ENCODE measurements at regions of chr14 and their contacts with region 1.

Region 1: GRCh38 chr14:103819503-103820307 is 27.7 kb downstream of the PPP1R13B start:
- DNase-seq: no peak
- H3K4me3 ChIP-seq: no peak overlapping the region
- H3K27ac ChIP-seq: no peak overlapping the region
- H3K4me1 ChIP-seq: peaks cover 14% of the 10 kb centered on the region
- H3K27me3 ChIP-seq: no peaks in the 10 kb centered on the region
- CTCF ChIP-seq: no peak
- POLR2A ChIP-seq: no peak

Region 2: GRCh38 chr14:103880348-103881267 is 60.9 kb after region 1 on chr14:
- intact Hi-C with region 1: loop called (anchors 10 kb)
- DNase-seq: no peak
- H3K4me3 ChIP-seq: peak overlapping the region; percentile 19 to 21
- H3K27ac ChIP-seq: peak overlapping the region; percentile 20
- H3K4me1 ChIP-seq: peaks cover 30% of the 10 kb centered on the region
- H3K27me3 ChIP-seq: no peaks in the 10 kb centered on the region
- CTCF ChIP-seq: no peak
- POLR2A ChIP-seq: no peak

Measured in vagina (tissue), 2 donors.